ENCODE measurements at regions of chr9 and their contacts with region 1.

Region 1: GRCh38 chr9:87324613-87325194 is 173.0 kb upstream of the DAPK1 start:
- ATAC-seq: peak in 7 of 8 experiments; percentile 25 to 74 (median 48)
- H3K4me3 ChIP-seq: no peak overlapping the region
- H3K27ac ChIP-seq: no peak overlapping the region
- H3K4me1 ChIP-seq: no peaks in the 10 kb centered on the region

Region 2: DNA sequence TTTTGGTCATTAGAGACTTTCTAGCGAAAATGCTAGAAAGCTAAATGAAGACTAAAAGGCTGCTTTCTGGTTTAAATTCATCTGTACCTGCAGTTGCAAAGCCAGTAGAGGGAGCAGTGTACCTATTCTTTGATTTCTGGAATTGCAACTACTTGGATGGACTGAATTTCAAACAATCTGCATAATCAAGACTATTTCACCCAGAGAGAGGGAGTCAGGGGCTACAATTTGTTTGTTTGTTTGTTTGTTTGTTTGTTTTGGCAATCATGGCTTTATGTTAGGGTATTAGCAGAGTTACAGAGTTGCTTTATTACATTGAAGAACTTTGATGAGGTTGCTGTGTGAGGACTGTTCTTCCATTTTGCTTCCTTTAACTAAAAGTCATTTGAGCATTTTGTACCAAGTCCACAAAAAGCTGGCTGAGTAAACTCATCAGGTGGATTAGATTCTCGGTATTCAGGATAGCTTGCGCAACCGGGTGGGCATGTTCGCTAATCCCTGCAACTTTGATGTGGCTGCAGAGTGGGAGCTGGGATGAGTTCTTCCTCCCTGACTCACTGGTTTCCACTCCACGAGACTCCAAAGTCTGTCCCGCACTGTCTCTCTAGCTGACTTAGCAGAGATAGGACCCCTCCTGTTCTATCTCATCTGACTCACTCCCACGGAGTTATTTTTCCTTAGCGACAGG is 890.5 kb before region 1 on chr9:
- in situ Hi-C with region 1: loop called in 1 of 9 experiments (anchors 10 kb)
- ATAC-seq: peak in 4 of 8 experiments; percentile 39 to 94 (median 84)
- H3K4me3 ChIP-seq: no peak overlapping the region
- H3K27ac ChIP-seq: no peak overlapping the region
- H3K4me1 ChIP-seq: no peaks in the 10 kb centered on the region

Region 3: GRCh38 chr9:86968258-86968920 is 356.3 kb before region 1 on chr9:
- in situ Hi-C with region 1: loop called in 3 of 9 experiments (anchors 25 kb)
- ATAC-seq: no peak
- H3K4me3 ChIP-seq: no peak overlapping the region
- H3K27ac ChIP-seq: no peak overlapping the region
- H3K4me1 ChIP-seq: no peaks in the 10 kb centered on the region

Region 4: GRCh38 chr9:87533272-87533671 is 208.6 kb after region 1 on chr9:
- in situ Hi-C with region 1: no loop called
- ATAC-seq: peak in 2 of 8 experiments; percentile 14 to 65
- H3K4me3 ChIP-seq: no peak overlapping the region
- H3K27ac ChIP-seq: no peak overlapping the region
- H3K4me1 ChIP-seq: peaks cover 21 to 38% of the 10 kb centered on the region in 2 donors